AG04449 (cell line): ENCODE measurements at regions of chr11 and their contacts with region 1.

Region 1: GRCh38 chr11:65773784-65774411 is 6.9 kb downstream of the AP5B1 start:
- DNase-seq: no peak
- H3K4me3 ChIP-seq: no peak overlapping the region
- CTCF ChIP-seq: no peak

Region 2: DNA sequence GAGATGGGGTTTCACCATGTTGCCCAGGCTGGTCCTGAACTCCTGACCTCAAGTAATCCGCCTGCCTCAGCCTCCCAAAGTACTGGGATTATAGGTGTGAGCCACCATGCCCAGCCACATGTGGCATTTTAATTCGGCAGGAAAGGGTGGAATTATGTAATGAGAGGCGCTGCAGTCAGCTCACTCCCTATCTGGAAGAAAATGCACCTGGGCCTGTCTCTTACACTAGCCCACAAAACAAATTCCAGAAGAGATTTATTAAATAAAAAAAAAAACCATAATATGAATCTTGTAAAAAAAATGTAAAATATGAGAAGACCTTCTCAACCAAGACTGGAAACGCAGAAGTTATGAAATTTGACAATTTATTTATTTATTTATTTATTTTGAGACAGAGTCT is 70.1 kb before region 1 on chr11:
- CTCF ChIA-PET with region 1: interaction called, 16 read pairs
- POLR2A ChIA-PET with region 1: no interaction called
- DNase-seq: no peak
- H3K4me3 ChIP-seq: no peak overlapping the region
- CTCF ChIP-seq: no peak

Region 3: DNA sequence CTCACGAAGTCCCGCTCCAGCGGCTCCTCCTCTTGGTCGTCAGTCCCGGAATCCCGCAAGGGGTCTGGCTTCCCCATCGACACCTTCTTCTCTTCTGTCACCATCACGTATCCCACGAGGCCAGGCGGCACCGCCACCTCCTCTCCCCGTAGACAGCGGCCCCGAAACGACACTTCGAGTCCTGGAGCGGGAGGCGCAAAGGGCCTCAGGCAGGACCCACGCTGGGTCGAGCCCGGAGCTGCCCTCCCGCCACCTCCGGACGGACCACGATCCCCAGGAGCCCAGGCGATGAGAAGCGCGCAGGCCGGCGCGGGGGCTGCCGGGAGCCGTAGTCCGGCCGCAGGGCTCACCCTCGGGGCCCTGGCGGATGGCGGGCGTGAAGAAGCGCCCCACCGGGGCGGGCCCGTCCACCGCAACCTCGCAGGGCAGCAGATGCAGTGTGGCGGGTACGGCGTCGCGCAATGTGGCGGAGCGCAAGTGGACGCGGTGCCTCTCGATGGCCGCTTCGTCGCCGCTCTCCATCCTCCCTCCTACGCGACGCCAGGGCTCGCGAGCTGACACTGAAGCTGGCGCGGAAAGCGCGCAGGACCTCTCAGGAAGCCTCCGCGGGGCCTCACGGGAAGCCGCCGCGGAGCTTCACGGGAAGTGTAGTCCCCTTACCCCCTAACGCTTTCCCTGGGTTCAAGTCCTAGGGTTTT is 53.5 kb before region 1 on chr11 and contains the start of gene RNASEH2C:
- CTCF ChIA-PET with region 1: interaction called, 13 read pairs
- POLR2A ChIA-PET with region 1: no interaction called
- DNase-seq: no peak
- H3K4me3 ChIP-seq: peak within 1 kb of the TSS; percentile 89
- CTCF ChIP-seq: no peak

Region 4: DNA sequence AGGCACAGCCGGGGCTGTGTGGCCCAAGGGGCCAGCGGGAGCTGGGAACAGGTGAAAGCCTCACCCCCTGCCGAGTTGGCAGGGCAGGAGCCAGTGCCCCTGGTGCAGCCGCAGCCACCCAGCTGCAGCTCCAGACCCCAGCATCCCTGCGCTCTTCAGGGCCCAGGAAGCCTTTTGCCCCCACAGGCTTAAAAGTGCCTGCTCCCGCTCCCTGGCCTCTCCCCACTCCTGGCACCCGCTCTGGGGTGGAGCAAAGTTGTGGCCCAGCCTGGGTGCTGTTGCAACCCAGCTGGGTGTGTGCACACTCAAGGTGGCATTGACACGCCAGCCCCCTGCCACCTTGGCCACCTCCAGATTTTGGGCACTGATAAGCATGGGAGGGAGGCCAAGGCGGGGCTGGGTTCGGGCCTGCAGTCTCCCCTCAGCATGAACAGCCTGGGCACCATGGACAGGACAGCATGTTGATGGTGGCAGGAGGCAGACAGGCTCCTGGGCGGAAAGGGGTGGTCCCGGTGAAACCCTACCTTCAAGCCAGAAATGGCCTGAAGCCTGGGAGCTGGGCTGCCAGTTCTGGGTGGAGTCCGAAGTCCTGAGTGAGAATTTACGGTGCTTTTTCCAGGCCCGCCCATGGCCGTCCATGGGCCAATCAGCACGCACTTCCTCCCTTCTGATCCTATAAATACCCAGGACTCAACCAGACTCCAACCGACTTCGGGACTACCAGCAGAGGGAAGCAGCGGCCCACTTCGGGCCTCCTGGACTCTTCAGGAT is 29.8 kb before region 1 on chr11:
- CTCF ChIA-PET with region 1: interaction called, 12 read pairs
- POLR2A ChIA-PET with region 1: no interaction called
- DNase-seq: no peak
- H3K4me3 ChIP-seq: no peak overlapping the region
- CTCF ChIP-seq: peak; percentile 27

Region 5: DNA sequence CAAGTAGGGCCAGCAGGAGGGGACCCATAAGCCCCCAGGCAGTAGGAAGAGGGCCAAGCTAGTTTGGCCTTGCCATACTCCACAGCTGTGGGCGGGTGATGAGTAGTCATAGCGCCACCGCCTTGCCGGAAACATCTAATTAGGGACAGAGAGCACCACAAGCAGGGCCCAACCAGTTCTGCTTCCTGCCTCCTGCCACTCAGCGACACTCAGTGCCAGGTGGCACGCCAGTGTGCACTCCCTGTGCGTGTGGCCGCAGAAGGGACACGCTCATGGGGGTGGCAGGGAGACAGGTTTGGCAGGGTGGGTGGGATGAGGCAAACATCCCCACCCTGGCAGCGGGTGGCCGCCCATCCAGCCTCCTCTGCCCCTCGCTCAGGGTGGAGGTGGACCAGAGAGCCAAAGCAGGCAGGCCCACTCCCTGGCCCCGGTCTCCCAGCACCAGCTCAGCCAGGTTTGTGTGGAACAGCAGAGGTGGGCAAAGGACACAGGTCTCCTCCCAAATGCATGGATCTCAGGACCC is 17.9 kb after region 1 on chr11:
- CTCF ChIA-PET with region 1: interaction called, 45 read pairs
- POLR2A ChIA-PET with region 1: interaction called, 3 read pairs
- DNase-seq: no peak
- H3K4me3 ChIP-seq: no peak overlapping the region
- CTCF ChIP-seq: no peak

Region 6: DNA sequence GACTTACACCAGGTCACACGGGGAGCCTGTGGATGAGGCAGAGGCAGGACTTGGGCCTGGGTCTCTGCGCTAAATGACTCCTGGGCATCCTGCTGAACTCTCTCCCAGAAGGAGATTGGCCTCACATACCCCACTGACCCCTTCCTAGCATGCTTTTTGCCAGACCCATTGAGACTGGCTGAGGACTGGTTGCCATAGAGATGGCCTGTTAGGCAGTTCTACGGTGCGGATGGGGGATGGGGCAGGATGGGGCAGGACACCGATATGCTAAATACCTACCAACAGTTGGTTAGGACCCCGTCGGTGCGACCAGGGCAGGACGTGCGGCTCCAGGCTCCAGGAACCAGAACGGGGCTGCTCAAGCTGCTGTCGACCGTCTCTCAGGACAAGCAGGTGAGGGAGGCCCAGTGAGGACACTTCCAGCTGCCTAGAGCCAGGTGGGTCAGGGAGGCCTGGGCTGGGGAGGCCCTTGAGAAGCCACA is 171.6 kb after region 1 on chr11 and contains the start of gene TSGA10IP:
- CTCF ChIA-PET with region 1: no interaction called
- POLR2A ChIA-PET with region 1: no interaction called
- DNase-seq: no peak
- H3K4me3 ChIP-seq: no peak within 1 kb of the TSS
- CTCF ChIP-seq: no peak